ENCODE measurements at regions of chr5 and their contacts with region 1.

Region 1: DNA sequence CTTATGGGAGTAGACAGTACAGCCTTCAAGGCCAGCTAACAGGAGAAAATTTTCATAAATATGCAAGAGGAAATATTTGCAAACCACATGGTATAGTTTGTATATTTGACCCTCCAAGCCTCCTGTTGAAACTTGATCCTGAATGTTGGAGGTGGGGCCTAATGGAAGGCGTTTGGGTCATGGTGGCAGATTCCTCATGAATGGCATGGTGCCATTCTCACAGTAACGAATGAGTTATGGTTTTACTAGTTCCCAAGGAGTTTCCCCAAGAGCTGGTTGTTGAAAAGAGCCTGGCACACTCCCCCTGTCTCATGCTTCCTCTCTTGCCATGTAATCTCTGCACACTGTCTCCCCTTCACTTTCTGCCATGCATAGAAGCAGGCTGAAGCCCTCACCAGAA is 3.3 kb upstream of the PAIP1 start:
- DNase-seq: no peak
- H3K4me3 ChIP-seq: no peak overlapping the region
- H3K27ac ChIP-seq: no peak overlapping the region
- H3K27me3 ChIP-seq: no peaks in the 10 kb centered on the region
- CTCF ChIP-seq: no peak

Region 2: DNA sequence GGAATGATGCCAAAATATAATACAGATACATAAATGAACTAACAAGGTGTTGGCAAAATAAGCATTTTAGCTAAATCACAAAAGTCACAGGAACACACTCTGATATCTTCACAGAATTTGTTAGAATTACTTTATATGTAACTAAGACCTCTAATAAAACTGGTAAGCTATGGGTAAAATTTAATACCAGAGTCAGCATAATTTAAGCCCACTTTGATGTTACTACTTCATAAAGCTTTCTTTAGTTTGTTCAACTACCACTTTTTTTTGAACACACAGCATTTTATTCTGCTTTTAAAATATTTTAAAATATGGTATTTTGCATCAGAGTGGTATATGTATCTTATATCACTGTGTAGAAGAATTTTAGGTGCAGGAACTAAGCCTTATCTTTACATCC is 23.2 kb before region 1 on chr5:
- CTCF ChIA-PET with region 1: interaction called, 12 read pairs
- POLR2A ChIA-PET with region 1: no interaction called
- DNase-seq: no peak
- H3K4me3 ChIP-seq: no peak overlapping the region
- H3K27ac ChIP-seq: no peak overlapping the region
- H3K27me3 ChIP-seq: no peaks in the 10 kb centered on the region
- CTCF ChIP-seq: no peak

Region 3: DNA sequence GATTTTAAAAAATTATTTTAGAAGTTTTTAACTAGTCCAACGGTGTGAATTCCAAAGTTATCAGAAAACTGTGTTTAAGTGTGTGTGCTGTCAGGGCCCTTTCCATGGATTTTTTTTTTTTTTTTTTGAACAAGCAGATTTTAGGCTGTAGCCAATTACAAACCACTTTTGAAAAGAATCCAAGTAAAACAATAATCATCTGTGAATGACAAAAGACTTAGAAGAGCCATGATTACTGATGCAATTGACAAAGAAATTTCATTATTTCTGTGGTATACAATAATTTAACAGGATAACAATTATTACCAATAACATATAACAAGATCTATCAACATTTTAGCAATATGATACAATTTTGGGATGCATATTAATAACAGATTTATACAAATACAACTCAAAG is 12.9 kb after region 1 on chr5:
- CTCF ChIA-PET with region 1: interaction called, 13 read pairs
- POLR2A ChIA-PET with region 1: no interaction called
- DNase-seq: no peak
- H3K4me3 ChIP-seq: no peak overlapping the region
- H3K27ac ChIP-seq: no peak overlapping the region
- H3K27me3 ChIP-seq: no peaks in the 10 kb centered on the region
- CTCF ChIP-seq: no peak

Region 4: DNA sequence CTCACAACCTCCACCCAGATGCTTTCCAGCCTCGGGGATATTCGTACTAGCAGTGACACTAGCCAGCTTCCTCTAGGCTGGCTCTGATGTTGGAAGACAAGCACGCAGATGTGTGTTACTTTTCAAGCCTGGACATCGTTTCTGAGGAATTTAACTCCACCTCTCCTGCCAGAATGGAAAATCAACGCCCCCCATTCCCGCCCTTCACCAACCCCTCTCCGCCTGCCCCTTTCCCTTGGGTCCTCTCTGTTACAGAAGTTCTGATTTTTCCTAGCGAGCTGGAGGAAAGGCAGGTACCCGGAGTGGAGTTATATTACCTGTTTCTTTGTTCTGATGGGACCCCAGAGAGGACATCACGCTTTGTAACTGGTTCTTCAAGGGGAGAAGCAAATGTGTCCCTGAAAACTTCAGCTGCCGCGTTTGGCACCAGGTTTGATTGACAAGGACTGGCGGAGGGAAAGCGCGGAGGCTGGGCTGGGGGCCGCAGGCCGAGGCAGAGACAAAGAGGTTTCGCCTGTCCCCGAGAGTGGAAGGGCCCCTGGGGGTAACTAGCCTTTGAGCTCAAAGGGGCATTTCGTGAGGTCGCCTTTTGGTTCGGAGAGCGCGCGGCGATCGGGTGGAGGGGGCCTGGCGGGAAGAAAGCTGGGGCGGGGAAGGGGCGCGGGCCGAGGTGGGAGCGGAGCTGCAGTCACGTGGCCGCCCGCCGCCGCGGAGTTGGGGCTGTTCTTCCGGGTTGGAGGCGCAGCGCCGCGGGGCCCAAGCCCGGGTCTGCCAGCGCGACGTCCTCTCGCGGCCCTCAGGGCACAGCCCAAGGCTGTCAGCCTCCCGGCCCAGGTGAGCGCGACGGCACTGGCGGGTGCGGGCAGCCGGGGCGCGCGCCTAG is 42.6 kb after region 1 on chr5 and contains the start of gene NNT:
- CTCF ChIA-PET with region 1: interaction called, 5 read pairs
- POLR2A ChIA-PET with region 1: interaction called, 13 read pairs
- DNase-seq: no peak
- H3K4me3 ChIP-seq: peak within 1 kb of the TSS; percentile 70
- H3K27ac ChIP-seq: peak within 1 kb of the TSS; percentile 63
- H3K27me3 ChIP-seq: no peaks in the 10 kb centered on the region
- CTCF ChIP-seq: no peak
- polyA plus RNA-seq, gene NNT: 55.4 and 64.6 TPM in 2 replicates

Measured in AG04450 (cell line).